ENCODE measurements at regions of chr14 and their contacts with region 1.

Region 1: GRCh38 chr14:100246826-100247428 is 8.0 kb downstream of the YY1 start:
- DNase-seq: no peak
- ATAC-seq: peak; percentile 29 to 70 (median 57)
- H3K4me3 ChIP-seq: no peak overlapping the region
- H3K27ac ChIP-seq: peak overlapping the region in 2 of 10 donors; percentile 1 to 9
- H3K4me1 ChIP-seq: peaks cover 18 to 97% (median 74%) of the 10 kb centered on the region in 9 donors
- H3K27me3 ChIP-seq: no peaks in the 10 kb centered on the region
- CTCF ChIP-seq: peak; percentile 23 to 71 (median 60)

Region 2: DNA sequence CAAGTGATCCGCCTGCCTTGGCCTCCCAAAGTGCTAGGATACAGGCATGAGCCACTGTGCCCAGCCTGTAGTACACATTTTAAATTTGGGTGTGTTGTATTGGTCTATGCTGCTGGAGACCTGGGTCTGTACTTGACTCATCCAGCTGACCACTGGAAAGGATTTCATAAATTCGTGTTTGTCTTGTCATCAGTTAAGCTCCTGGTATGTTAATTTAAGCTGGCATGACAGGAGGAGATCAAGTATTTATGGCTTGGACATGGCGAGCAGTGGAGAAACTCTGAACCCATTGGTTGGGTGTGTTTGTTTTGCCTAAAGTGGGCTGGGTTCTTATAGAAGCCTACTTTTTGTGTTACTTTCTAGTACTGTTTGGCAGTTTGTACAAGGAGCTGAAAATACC is 16.2 kb after region 1 on chr14:
- intact Hi-C with region 1: loop called in 1 of 10 experiments (anchors 2 kb)
- DNase-seq: no peak
- ATAC-seq: peak in 1 of 8 donors; percentile 8
- H3K4me3 ChIP-seq: no peak overlapping the region
- H3K27ac ChIP-seq: peak overlapping the region in 5 of 10 donors; percentile 2 to 64 (median 20)
- H3K4me1 ChIP-seq: peaks cover 0 to 78% (median 49%) of the 10 kb centered on the region in 9 donors
- H3K27me3 ChIP-seq: no peaks in the 10 kb centered on the region
- CTCF ChIP-seq: no peak

Region 3: DNA sequence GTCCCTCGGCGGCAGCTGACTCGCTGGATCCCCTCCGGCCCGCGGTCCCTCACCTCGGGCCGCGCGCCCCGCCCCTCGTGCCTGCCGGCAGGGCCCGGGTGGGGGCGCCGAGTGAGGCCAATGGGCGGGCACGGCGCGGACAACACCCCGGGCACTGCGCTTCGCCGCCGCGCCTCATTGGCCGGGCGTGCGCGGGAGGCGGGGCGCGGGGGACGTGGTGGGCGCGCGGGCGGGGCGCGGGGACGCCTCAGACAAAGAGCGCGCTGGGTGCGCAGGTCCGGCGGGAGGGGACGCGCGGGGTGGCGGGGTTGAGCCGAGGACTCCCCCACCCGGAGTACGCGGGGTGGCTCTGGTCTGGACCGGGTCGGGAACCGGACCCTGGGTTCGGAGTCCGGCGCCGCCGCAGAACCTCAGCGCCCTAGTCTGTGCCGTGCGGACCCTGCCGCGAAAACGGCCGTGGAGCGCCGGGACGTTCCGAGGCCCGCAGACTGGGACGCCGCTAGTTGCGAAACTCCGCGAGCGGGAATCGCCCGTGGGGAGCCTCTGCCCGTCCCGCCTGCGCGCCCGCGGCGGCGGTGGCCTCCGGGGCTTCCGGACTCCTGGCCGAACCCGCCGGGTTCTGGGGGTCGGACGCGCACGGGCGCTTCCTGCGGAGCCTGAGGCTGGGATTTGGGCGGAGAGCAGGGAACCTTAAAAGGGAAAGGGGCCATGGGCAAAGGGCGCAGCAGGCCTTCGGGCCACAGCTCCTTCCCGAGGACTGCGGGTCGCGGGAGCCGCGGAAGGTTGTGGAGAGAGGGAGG is 59.7 kb after region 1 on chr14 and contains the start of gene SLC25A29:
- intact Hi-C with region 1: loop called in 2 of 10 experiments (anchors 5 kb)
- DNase-seq: peak; percentile 88 to 90
- ATAC-seq: peak; percentile 87 to 94 (median 90)
- H3K4me3 ChIP-seq: peak within 1 kb of the TSS; percentile 65 to 99 (median 92)
- H3K27ac ChIP-seq: peak within 1 kb of the TSS; percentile 84 to 95 (median 90)
- H3K4me1 ChIP-seq: peaks cover 4 to 69% (median 45%) of the 10 kb centered on the region in 9 donors
- H3K27me3 ChIP-seq: no peaks in the 10 kb centered on the region
- CTCF ChIP-seq: no peak
- total RNA-seq, gene SLC25A29: 11.0 to 25.3 (median 21.7) TPM